AG04450 (cell line): ENCODE measurements at regions of chr9 and their contacts with region 1.

Region 1: GRCh38 chr9:127899128-127899946 is at the start of gene ST6GALNAC6:
- DNase-seq: no peak
- H3K4me3 ChIP-seq: peak within 1 kb of the TSS; percentile 80
- H3K27ac ChIP-seq: peak within 1 kb of the TSS; percentile 90
- H3K27me3 ChIP-seq: no peaks in the 10 kb centered on the region
- CTCF ChIP-seq: no peak
- polyA plus RNA-seq, gene ST6GALNAC6: 40.6 and 58.2 TPM in 2 replicates

Region 2: DNA sequence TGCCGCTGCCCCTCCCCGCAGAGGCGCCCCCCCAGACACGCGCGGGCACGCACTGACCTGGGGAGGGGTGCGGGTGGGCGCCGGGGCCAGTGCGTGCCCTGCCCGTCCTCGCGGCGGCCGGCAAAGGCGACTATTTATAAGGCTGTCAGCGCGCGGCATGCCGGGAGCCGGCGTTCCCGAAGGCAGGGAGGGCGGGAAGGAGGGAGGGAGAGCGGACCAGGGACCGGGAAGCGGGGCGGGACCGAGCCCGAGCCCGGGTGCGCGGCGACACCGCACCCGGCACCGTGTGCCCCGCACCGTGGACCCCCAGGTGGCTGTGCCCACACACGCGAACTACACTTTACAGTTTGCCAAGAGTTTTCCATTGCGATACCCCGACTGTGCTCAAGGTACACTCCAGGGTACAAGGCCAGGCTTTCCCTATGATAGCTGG is 21.8 kb before region 1 on chr9 and contains the start of gene AK1:
- CTCF ChIA-PET with region 1: no interaction called
- POLR2A ChIA-PET with region 1: interaction called, 13 read pairs
- DNase-seq: no peak
- H3K4me3 ChIP-seq: peak within 1 kb of the TSS; percentile 70
- H3K27ac ChIP-seq: peak within 1 kb of the TSS; percentile 11
- H3K27me3 ChIP-seq: no peaks in the 10 kb centered on the region
- CTCF ChIP-seq: no peak
- polyA plus RNA-seq, gene AK1: 75.9 and 93.9 TPM in 2 replicates

Region 3: DNA sequence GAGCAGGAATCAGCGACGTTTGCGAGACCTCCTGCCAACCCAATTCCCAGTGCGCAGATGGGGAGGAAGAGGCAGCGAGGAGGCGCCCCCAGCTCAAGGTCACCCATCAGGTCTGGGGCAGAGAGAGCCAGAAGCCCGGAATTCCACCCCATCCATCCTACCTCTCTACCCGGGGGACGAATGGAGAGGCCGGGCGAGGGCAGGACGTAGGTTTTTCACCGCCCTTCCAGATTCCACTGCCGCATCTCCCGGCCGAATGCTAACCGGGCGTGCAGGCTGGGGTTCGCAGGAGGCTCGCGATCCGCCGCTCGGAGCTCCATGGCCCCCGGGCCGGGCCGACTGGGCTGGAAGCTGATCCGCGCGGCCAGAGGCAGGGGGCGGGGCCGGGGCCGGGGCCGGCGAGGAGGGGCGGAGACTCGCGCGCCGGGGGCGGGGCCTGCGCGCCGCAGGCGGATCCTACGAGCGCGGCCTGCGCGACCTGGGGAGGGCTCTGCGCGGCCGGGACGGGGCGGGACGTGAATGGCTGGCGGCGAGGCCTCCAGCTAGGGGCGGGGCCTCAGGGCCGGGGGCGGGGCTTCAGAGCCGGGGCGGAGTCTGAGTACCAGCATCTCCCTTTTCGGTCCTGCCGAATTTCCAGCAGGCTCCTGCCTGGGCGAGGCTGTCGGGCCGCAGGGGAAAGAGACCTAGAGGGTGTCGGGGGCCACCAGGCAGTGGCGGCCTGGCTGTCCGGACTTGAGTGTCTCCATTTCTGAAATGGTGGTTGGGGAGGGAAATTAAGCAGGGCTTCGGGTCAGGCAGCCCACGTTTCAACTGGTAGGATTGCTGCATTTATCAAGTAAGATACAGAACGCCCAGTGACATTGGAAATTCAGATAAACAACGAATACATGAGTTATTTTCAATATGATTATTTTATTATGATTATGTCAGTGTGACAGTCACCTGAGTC is 17.6 kb after region 1 on chr9 and contains the start of gene ST6GALNAC4:
- CTCF ChIA-PET with region 1: interaction called, 5 read pairs
- POLR2A ChIA-PET with region 1: interaction called, 18 read pairs
- DNase-seq: peak; percentile 70
- H3K4me3 ChIP-seq: peak within 1 kb of the TSS; percentile 80
- H3K27ac ChIP-seq: peak within 1 kb of the TSS; percentile 21
- H3K27me3 ChIP-seq: no peaks in the 10 kb centered on the region
- CTCF ChIP-seq: no peak
- polyA plus RNA-seq, gene ST6GALNAC4: 15.0 and 24.3 TPM in 2 replicates

Region 4: GRCh38 chr9:127937388-127938280 is 38.3 kb after region 1 on chr9 and contains the start of gene DPM2:
- CTCF ChIA-PET with region 1: no interaction called
- POLR2A ChIA-PET with region 1: no interaction called
- DNase-seq: no peak
- H3K4me3 ChIP-seq: peak within 1 kb of the TSS; percentile 96
- H3K27ac ChIP-seq: peak within 1 kb of the TSS; percentile 22
- H3K27me3 ChIP-seq: no peaks in the 10 kb centered on the region
- CTCF ChIP-seq: no peak
- polyA plus RNA-seq, gene DPM2: 25.3 and 30.9 TPM in 2 replicates